ENCODE measurements at regions of chr12 and their contacts with region 1.

Region 1: GRCh38 chr12:58346032-58346632 is 404.8 kb downstream of the ATP23 start:
- DNase-seq: peak; percentile 29 to 60 (median 60)
- H3K4me3 ChIP-seq: no peak overlapping the region
- H3K27ac ChIP-seq: no peak overlapping the region
- H3K4me1 ChIP-seq: peaks cover 0 to 15% (median 8%) of the 10 kb centered on the region in 4 experiments
- H3K27me3 ChIP-seq: no peaks in the 10 kb centered on the region

Region 2: GRCh38 chr12:58443273-58443980 is 97.3 kb after region 1 on chr12:
- CTCF ChIA-PET with region 1: interaction called, 74 read pairs
- POLR2A ChIA-PET with region 1: no interaction called
- DNase-seq: peak; percentile 50 to 77 (median 69)
- H3K4me3 ChIP-seq: no peak overlapping the region
- H3K27ac ChIP-seq: no peak overlapping the region
- H3K4me1 ChIP-seq: no peaks in the 10 kb centered on the region
- H3K27me3 ChIP-seq: peaks cover 0 to 4% (median 0%) of the 10 kb centered on the region in 5 experiments